Panc1 (cell line): ENCODE measurements at regions of chr5 and their contacts with region 1.

Region 1: GRCh38 chr5:148998174-148998797 is 64.6 kb downstream of the SH3TC2 start:
- DNase-seq: peak; percentile 60
- ATAC-seq: peak; percentile 62
- H3K4me3 ChIP-seq: no peak overlapping the region
- H3K27ac ChIP-seq: no peak overlapping the region
- H3K4me1 ChIP-seq: no peaks in the 10 kb centered on the region
- H3K27me3 ChIP-seq: no peaks in the 10 kb centered on the region
- CTCF ChIP-seq: peak; percentile 78

Region 2: GRCh38 chr5:148740966-148741742 is 257.1 kb before region 1 on chr5:
- CTCF ChIA-PET with region 1: interaction called, 4 read pairs
- POLR2A ChIA-PET with region 1: no interaction called
- in situ Hi-C with region 1: no loop called
- intact Hi-C with region 1: loop called (anchors 2 kb)
- DNase-seq: peak; percentile 69
- ATAC-seq: peak; percentile 73
- H3K4me3 ChIP-seq: no peak overlapping the region
- H3K27ac ChIP-seq: no peak overlapping the region
- H3K4me1 ChIP-seq: no peaks in the 10 kb centered on the region
- H3K27me3 ChIP-seq: no peaks in the 10 kb centered on the region
- CTCF ChIP-seq: peak; percentile 76; the same call in 1 of the 2 replicates

Region 3: GRCh38 chr5:148826053-148826738 is 172.1 kb before region 1 on chr5 and contains the start of gene ADRB2:
- CTCF ChIA-PET with region 1: no interaction called
- POLR2A ChIA-PET with region 1: no interaction called
- in situ Hi-C with region 1: no loop called
- intact Hi-C with region 1: loop called (anchors 10 kb)
- DNase-seq: peak; percentile 71
- ATAC-seq: peak; percentile 98
- H3K4me3 ChIP-seq: peak within 1 kb of the TSS; percentile 56 to 86
- H3K27ac ChIP-seq: no peak within 1 kb of the TSS; the same call in 1 of the 2 replicates
- H3K4me1 ChIP-seq: peaks cover 10% of the 10 kb centered on the region; the same call in 1 of the 2 replicates
- H3K27me3 ChIP-seq: no peaks in the 10 kb centered on the region; the same call in 1 of the 2 replicates
- CTCF ChIP-seq: no peak
- total RNA-seq, gene ADRB2: 1.0 TPM

Region 4: GRCh38 chr5:148887123-148887881 is 111.0 kb before region 1 on chr5:
- CTCF ChIA-PET with region 1: no interaction called
- POLR2A ChIA-PET with region 1: no interaction called
- in situ Hi-C with region 1: no loop called
- intact Hi-C with region 1: no loop called
- DNase-seq: no peak
- ATAC-seq: no peak
- H3K4me3 ChIP-seq: no peak overlapping the region
- H3K27ac ChIP-seq: no peak overlapping the region
- H3K4me1 ChIP-seq: no peaks in the 10 kb centered on the region
- H3K27me3 ChIP-seq: no peaks in the 10 kb centered on the region
- CTCF ChIP-seq: no peak

Region 5: DNA sequence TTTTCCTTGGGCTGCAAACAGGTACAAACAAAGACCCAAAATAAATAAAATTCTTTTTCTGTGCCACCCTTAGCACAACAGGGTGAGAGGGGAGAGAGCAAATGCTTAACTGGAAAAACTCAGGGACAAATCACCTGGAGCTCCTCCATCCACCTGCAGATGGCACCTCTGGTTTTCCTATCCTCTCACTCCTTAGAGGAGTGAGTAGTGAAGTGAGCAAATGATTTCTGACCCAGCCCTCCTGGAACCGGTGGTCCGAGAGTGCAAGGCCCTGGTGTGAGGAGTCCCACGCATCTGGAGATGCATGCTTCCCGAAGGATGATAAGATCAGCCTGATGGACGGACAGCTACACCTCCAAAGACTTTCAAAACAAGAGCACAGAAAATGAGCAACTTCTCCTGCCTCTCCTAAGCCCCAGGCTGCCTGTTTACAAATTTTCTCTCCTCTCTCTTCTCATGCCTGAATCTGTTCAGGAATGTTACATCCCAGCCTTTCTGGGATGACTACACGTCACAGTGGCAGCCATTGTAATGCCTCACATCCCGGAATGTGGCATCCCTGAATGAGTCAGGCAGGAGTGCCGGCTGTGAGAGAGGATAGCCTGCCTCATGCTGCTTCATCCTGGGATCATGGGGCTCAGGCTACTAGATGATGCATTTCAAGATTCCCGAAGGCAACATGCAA is 85.4 kb before region 1 on chr5:
- CTCF ChIA-PET with region 1: no interaction called
- POLR2A ChIA-PET with region 1: no interaction called
- in situ Hi-C with region 1: no loop called
- intact Hi-C with region 1: loop called (anchors 2 kb)
- DNase-seq: peak; percentile 78
- ATAC-seq: peak; percentile 85
- H3K4me3 ChIP-seq: peak overlapping the region in 1 of 2 experiments; percentile 26; a peak in 2 of 4 replicates
- H3K27ac ChIP-seq: peak overlapping the region; percentile 21; the same call in 1 of the 2 replicates
- H3K4me1 ChIP-seq: peaks cover 8% of the 10 kb centered on the region
- H3K27me3 ChIP-seq: no peaks in the 10 kb centered on the region
- CTCF ChIP-seq: peak; percentile 78